ENCODE measurements at regions of chr19 and their contacts with region 1.

Region 1: GRCh38 chr19:44657211-44657921 is 13.7 kb downstream of the PVR start:
- DNase-seq: peak; percentile 64 to 80
- ATAC-seq: peak; percentile 71 to 81 (median 72)
- H3K4me3 ChIP-seq: no peak overlapping the region
- H3K4me3 Mint-ChIP-seq: no peak overlapping the region
- H3K27ac ChIP-seq: no peak overlapping the region
- H3K27ac Mint-ChIP-seq: peak overlapping the region in 1 of 2 donors; percentile 6
- H3K4me1 ChIP-seq: peaks cover 11% of the 10 kb centered on the region
- H3K4me1 Mint-ChIP-seq: peaks cover 8% of the 10 kb centered on the region in 2 donors
- H3K27me3 ChIP-seq: no peaks in the 10 kb centered on the region
- H3K27me3 Mint-ChIP-seq: no peaks in the 10 kb centered on the region
- CTCF ChIP-seq: peak; percentile 94

Region 2: GRCh38 chr19:44401139-44402115 is 255.9 kb before region 1 on chr19 and contains the start of gene ZNF285:
- intact Hi-C with region 1: no loop called
- DNase-seq: peak; percentile 73 to 80
- ATAC-seq: peak; percentile 74 to 99 (median 98)
- H3K4me3 ChIP-seq: peak within 1 kb of the TSS; percentile 67
- H3K4me3 Mint-ChIP-seq: peak within 1 kb of the TSS; percentile 99
- H3K27ac ChIP-seq: no peak within 1 kb of the TSS
- H3K27ac Mint-ChIP-seq: peak within 1 kb of the TSS; percentile 79 to 83
- H3K4me1 ChIP-seq: peaks cover 9% of the 10 kb centered on the region
- H3K4me1 Mint-ChIP-seq: peaks cover 7 to 8% of the 10 kb centered on the region in 2 donors
- H3K27me3 ChIP-seq: no peaks in the 10 kb centered on the region
- H3K27me3 Mint-ChIP-seq: peaks cover 4 to 14% of the 10 kb centered on the region in 2 donors
- CTCF ChIP-seq: no peak
- total RNA-seq, gene ZNF285: 0.82 to 2.2 (median 0.88) TPM

Region 3: GRCh38 chr19:44500148-44500956 is 157.0 kb before region 1 on chr19 and contains the start of gene ZNF180:
- intact Hi-C with region 1: no loop called
- DNase-seq: peak; percentile 96 to 97
- ATAC-seq: peak; percentile 90 to 97 (median 91)
- H3K4me3 ChIP-seq: peak within 1 kb of the TSS; percentile 75
- H3K4me3 Mint-ChIP-seq: peak within 1 kb of the TSS; percentile 97
- H3K27ac ChIP-seq: peak within 1 kb of the TSS; percentile 71
- H3K27ac Mint-ChIP-seq: peak within 1 kb of the TSS; percentile 91 to 95
- H3K4me1 ChIP-seq: peaks cover 31% of the 10 kb centered on the region
- H3K4me1 Mint-ChIP-seq: peaks cover 38 to 49% of the 10 kb centered on the region in 2 donors
- H3K27me3 ChIP-seq: peaks cover 4% of the 10 kb centered on the region
- H3K27me3 Mint-ChIP-seq: peaks cover 6 to 18% of the 10 kb centered on the region in 2 donors
- CTCF ChIP-seq: peak; percentile 55
- total RNA-seq, gene ZNF180: 6.0 to 8.7 (median 8.0) TPM

Region 4: DNA sequence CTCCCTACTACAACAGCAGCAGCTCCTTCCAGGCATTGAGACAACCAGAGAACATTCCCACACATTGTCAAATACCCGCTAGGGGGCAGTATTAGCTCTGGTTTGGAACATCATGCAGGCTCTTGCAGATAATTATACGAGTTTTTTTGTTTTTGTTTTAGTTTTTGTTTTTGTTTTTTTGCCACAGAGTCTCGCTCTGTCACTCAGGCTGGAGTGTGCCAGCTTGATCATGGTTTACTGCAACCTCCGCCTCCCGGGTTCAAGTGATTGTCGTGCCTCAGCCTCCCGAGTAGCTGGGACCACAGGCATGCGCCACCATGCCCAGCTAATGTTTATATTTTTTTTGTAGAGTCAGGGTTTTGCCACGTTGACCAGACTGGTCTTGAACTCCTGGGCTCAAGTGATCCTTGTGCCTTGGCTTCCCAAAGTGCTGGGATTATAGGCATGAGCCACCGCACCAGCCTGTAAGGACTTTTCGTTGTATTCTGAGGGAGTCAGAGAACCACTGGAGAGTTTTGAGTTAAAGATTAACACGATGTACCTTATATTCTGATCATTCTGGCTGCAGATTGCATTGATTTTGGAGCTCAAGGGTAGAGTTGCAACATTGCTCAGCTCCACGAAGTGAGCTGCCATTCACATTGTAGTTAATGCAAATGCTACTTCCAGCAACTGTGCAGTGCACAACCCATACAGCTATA is 86.2 kb before region 1 on chr19:
- intact Hi-C with region 1: loop called (anchors 1 kb)
- DNase-seq: peak; percentile 22 to 70
- ATAC-seq: peak; percentile 50 to 76 (median 54)
- H3K4me3 ChIP-seq: no peak overlapping the region
- H3K4me3 Mint-ChIP-seq: no peak overlapping the region
- H3K27ac ChIP-seq: no peak overlapping the region
- H3K27ac Mint-ChIP-seq: no peak overlapping the region
- H3K4me1 ChIP-seq: no peaks in the 10 kb centered on the region
- H3K4me1 Mint-ChIP-seq: peaks cover 0 to 7% of the 10 kb centered on the region in 2 donors
- H3K27me3 ChIP-seq: no peaks in the 10 kb centered on the region
- H3K27me3 Mint-ChIP-seq: peaks cover 15 to 18% of the 10 kb centered on the region in 2 donors
- CTCF ChIP-seq: peak; percentile 67

Region 5: GRCh38 chr19:44576843-44577565 is 80.4 kb before region 1 on chr19:
- intact Hi-C with region 1: loop called (anchors 1 kb)
- DNase-seq: peak in 1 of 2 donors; percentile 46
- ATAC-seq: peak; percentile 57 to 80 (median 65)
- H3K4me3 ChIP-seq: no peak overlapping the region
- H3K4me3 Mint-ChIP-seq: no peak overlapping the region
- H3K27ac ChIP-seq: no peak overlapping the region
- H3K27ac Mint-ChIP-seq: no peak overlapping the region
- H3K4me1 ChIP-seq: no peaks in the 10 kb centered on the region
- H3K4me1 Mint-ChIP-seq: no peaks in the 10 kb centered on the region
- H3K27me3 ChIP-seq: no peaks in the 10 kb centered on the region
- H3K27me3 Mint-ChIP-seq: no peaks in the 10 kb centered on the region
- CTCF ChIP-seq: peak; percentile 29

Region 6: GRCh38 chr19:44587963-44588770 is 69.2 kb before region 1 on chr19:
- intact Hi-C with region 1: no loop called
- DNase-seq: peak in 1 of 2 donors; percentile 16
- ATAC-seq: peak in 2 of 3 donors; percentile 49 to 57
- H3K4me3 ChIP-seq: no peak overlapping the region
- H3K4me3 Mint-ChIP-seq: no peak overlapping the region
- H3K27ac ChIP-seq: no peak overlapping the region
- H3K27ac Mint-ChIP-seq: peak overlapping the region in 1 of 2 donors; percentile 59
- H3K4me1 ChIP-seq: no peaks in the 10 kb centered on the region
- H3K4me1 Mint-ChIP-seq: peaks cover 18 to 19% of the 10 kb centered on the region in 2 donors
- H3K27me3 ChIP-seq: no peaks in the 10 kb centered on the region
- H3K27me3 Mint-ChIP-seq: peaks cover 0 to 2% of the 10 kb centered on the region in 2 donors
- CTCF ChIP-seq: no peak